Natural killer cell (primary cell): ENCODE measurements at regions of chr19 and their contacts with region 1.

Region 1: DNA sequence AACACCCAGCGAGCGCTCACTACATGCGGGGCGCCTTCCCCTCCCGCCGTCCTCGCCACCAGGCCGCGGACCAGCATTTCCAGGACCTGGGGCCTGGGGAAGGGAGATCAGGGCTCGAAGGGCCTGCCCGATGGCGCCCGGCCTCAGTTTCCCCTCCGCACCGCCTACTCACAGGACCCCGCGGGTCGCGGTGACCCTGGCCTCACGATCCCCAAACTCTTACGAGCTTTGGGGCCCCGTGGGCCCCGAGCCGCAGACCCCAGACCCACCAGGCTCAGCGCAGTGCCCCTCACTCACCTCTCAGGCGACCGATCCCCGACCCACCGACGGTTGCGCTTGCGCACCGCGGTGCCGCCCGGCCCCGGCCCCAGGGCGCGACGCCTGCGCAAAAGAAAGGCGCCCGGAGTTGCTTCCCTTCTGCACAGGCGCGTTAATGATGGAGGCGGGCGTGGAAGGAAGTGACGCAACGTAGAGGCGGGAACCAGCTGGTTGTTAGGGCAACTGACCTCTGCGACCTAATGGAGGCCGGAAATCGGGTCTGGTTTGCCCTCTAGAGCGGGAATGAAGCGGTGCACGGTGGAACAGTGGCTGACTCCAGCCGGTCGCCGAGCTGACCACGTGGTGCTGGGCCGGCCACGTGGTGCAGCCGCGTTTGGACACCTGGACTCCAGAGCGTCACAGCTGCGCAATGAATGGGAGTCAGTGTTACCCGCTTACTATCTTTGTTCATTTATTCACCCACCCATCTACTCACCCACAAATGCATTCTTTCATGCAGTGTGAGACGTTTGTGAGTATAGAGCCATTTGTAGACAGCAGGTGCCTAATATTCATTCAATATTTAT is at the start of gene SGTA:
- DNase-seq: peak; percentile 94 to 98
- ATAC-seq: peak; percentile 69 to 86 (median 77)
- H3K4me3 ChIP-seq: peak within 1 kb of the TSS; percentile 96
- H3K4me3 Mint-ChIP-seq: peak within 1 kb of the TSS; percentile 88
- H3K27ac ChIP-seq: peak within 1 kb of the TSS; percentile 94
- H3K27ac Mint-ChIP-seq: peak within 1 kb of the TSS; percentile 92 to 93
- H3K4me1 ChIP-seq: peaks cover 40% of the 10 kb centered on the region
- H3K4me1 Mint-ChIP-seq: peaks cover 28 to 36% of the 10 kb centered on the region in 2 donors
- H3K27me3 ChIP-seq: no peaks in the 10 kb centered on the region
- H3K27me3 Mint-ChIP-seq: no peaks in the 10 kb centered on the region
- CTCF ChIP-seq: peak; percentile 38
- total RNA-seq, gene SGTA: 35.2 to 38.1 (median 36.2) TPM

Region 2: DNA sequence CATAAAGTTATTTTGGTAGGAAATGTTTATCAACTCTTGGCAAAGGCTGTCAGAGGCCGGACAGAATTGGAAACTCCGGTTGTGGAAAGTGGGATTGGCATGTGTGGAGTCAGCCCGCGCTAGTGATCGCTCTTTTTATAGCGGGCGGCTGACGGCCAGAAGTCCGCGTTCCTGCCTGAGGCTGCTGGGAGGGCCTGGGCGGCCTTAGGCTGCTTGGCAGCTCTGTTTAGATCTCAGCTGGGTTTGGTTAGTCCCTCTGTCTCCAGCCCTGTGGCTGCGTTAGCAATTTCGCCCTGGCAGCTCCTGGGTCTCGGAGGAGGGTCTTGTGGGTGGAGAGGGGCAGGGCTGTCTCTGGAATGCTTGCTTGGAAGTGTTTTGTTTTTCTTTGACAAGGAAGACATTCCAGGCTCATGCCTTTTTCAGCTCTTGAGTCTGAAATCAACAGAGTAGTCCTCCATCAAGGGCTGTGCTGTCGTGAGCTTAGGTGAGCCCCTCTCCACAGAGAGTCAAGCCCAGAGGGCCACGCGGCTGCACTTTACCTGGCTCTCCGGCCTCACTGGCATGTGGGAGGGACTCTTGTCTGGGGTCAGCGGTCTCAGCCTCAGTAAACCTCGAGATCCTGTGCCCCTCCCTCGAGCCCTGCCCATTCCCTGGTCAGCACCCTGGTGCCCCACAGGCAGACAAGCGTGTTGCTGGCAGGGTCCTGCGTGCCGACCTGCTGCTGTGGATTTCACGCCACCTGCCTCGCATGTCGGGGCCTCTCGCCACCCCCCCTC is 596.9 kb before region 1 on chr19:
- intact Hi-C with region 1: no loop called
- DNase-seq: no peak
- ATAC-seq: no peak
- H3K4me3 ChIP-seq: no peak overlapping the region
- H3K4me3 Mint-ChIP-seq: no peak overlapping the region
- H3K27ac ChIP-seq: no peak overlapping the region
- H3K27ac Mint-ChIP-seq: peak overlapping the region in 1 of 2 donors; percentile 22
- H3K4me1 ChIP-seq: peaks cover 34% of the 10 kb centered on the region
- H3K4me1 Mint-ChIP-seq: peaks cover 26 to 29% of the 10 kb centered on the region in 2 donors
- H3K27me3 ChIP-seq: no peaks in the 10 kb centered on the region
- H3K27me3 Mint-ChIP-seq: no peaks in the 10 kb centered on the region
- CTCF ChIP-seq: no peak

Region 3: GRCh38 chr19:2722541-2723344 is 60.4 kb before region 1 on chr19:
- intact Hi-C with region 1: no loop called
- DNase-seq: no peak
- ATAC-seq: no peak
- H3K4me3 ChIP-seq: no peak overlapping the region
- H3K4me3 Mint-ChIP-seq: no peak overlapping the region
- H3K27ac ChIP-seq: no peak overlapping the region
- H3K27ac Mint-ChIP-seq: no peak overlapping the region
- H3K4me1 ChIP-seq: peaks cover 21% of the 10 kb centered on the region
- H3K4me1 Mint-ChIP-seq: peaks cover 5% of the 10 kb centered on the region in 2 donors
- H3K27me3 ChIP-seq: peaks cover 17% of the 10 kb centered on the region
- H3K27me3 Mint-ChIP-seq: peaks cover 8 to 15% of the 10 kb centered on the region in 2 donors
- CTCF ChIP-seq: no peak

Region 4: DNA sequence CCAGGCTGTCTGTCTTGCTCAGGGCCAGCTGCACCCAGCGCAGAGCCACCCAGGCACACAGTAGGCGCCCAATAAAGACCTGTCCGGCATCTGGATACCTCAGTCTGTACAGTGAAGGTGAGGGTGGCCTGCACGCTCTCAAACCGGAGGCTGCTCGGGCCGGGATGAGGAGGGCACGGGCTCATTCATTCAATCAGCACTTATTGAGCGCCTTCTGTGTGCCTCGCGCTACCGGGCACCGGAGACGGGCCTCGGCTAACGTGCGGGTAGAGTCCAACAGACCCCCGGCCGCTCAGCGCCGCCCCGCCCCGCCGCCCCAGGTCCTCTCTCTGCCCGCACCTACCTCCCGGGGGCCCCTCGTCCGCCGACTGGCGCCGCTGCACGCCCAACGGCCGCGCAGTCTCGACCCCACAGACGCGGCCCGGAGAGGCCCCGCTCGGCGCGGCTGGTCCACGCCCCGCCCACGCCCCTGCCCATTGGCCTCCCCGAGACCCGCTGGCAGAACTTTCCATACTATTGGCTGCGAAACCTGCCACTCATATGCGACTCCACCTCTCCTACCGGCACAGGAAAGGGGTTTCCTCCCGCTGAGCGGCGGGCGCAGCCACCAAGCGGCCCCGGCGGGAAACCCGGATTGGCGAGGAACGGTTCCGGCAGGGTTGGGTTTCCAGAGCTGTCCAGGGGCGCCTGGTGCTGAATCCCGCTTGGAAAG is 43.4 kb before region 1 on chr19 and contains the start of gene SLC39A3:
- intact Hi-C with region 1: loop called (anchors 1 kb)
- DNase-seq: peak; percentile 97 to 98
- ATAC-seq: peak; percentile 99 to 100 (median 100)
- H3K4me3 ChIP-seq: peak within 1 kb of the TSS; percentile 64
- H3K4me3 Mint-ChIP-seq: peak within 1 kb of the TSS; percentile 86
- H3K27ac ChIP-seq: peak within 1 kb of the TSS; percentile 54
- H3K27ac Mint-ChIP-seq: peak within 1 kb of the TSS in 1 of 2 donors; percentile 68
- H3K4me1 ChIP-seq: peaks cover 14% of the 10 kb centered on the region
- H3K4me1 Mint-ChIP-seq: peaks cover 16 to 21% of the 10 kb centered on the region in 2 donors
- H3K27me3 ChIP-seq: no peaks in the 10 kb centered on the region
- H3K27me3 Mint-ChIP-seq: peaks cover 13 to 14% of the 10 kb centered on the region in 2 donors
- CTCF ChIP-seq: no peak
- total RNA-seq, gene SLC39A3: 14.8 to 29.4 (median 19.6) TPM

Region 5: DNA sequence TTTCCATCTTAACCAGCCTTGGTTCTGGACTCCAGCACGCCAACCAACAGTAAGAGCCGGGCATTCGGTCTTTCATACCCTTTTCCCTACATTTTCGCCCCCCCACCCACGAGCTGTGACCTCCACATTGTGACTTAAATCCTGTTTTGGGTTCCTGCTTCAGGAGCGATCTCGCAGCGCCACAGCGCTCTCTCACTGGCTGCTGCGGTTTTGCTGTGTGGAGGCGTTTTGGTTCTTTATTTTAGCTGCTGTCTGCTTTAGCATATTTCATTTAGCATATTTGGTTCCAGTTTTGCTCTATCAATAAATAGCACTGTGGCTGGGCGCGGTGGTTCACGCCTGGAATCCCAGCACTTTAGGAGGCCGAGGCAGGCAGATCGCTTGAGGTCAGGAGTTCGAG is 23.8 kb before region 1 on chr19:
- intact Hi-C with region 1: no loop called
- DNase-seq: no peak
- ATAC-seq: no peak
- H3K4me3 ChIP-seq: no peak overlapping the region
- H3K4me3 Mint-ChIP-seq: no peak overlapping the region
- H3K27ac ChIP-seq: no peak overlapping the region
- H3K27ac Mint-ChIP-seq: no peak overlapping the region
- H3K4me1 ChIP-seq: no peaks in the 10 kb centered on the region
- H3K4me1 Mint-ChIP-seq: no peaks in the 10 kb centered on the region
- H3K27me3 ChIP-seq: no peaks in the 10 kb centered on the region
- H3K27me3 Mint-ChIP-seq: no peaks in the 10 kb centered on the region
- CTCF ChIP-seq: no peak

Region 6: GRCh38 chr19:2820112-2820702 is 37.0 kb after region 1 on chr19:
- intact Hi-C with region 1: loop called (anchors 1 kb)
- DNase-seq: peak in 1 of 2 donors; percentile 23
- ATAC-seq: peak in 2 of 3 donors; percentile 9 to 14
- H3K4me3 ChIP-seq: peak overlapping the region; percentile 48
- H3K4me3 Mint-ChIP-seq: peak overlapping the region; percentile 72
- H3K27ac ChIP-seq: no peak overlapping the region
- H3K27ac Mint-ChIP-seq: peak overlapping the region in 1 of 2 donors; percentile 85
- H3K4me1 ChIP-seq: peaks cover 11% of the 10 kb centered on the region
- H3K4me1 Mint-ChIP-seq: no peaks in the 10 kb centered on the region
- H3K27me3 ChIP-seq: no peaks in the 10 kb centered on the region
- H3K27me3 Mint-ChIP-seq: no peaks in the 10 kb centered on the region
- CTCF ChIP-seq: no peak

Region 7: GRCh38 chr19:3047425-3048189 is 264.4 kb after region 1 on chr19:
- intact Hi-C with region 1: no loop called
- DNase-seq: peak in 1 of 2 donors; percentile 80
- ATAC-seq: peak; percentile 35 to 79 (median 78)
- H3K4me3 ChIP-seq: peak overlapping the region; percentile 18
- H3K4me3 Mint-ChIP-seq: peak overlapping the region; percentile 85
- H3K27ac ChIP-seq: no peak overlapping the region
- H3K27ac Mint-ChIP-seq: peak overlapping the region; percentile 69 to 82
- H3K4me1 ChIP-seq: peaks cover 11% of the 10 kb centered on the region
- H3K4me1 Mint-ChIP-seq: peaks cover 7 to 13% of the 10 kb centered on the region in 2 donors
- H3K27me3 ChIP-seq: no peaks in the 10 kb centered on the region
- H3K27me3 Mint-ChIP-seq: peaks cover 0 to 11% of the 10 kb centered on the region in 2 donors
- CTCF ChIP-seq: no peak